GM10248 (cell line): ENCODE measurements at regions of chr5 and their contacts with region 1.

Region 1: GRCh38 chr5:160054831-160055230 is 45.9 kb downstream of the TTC1 start:
- DNase-seq: no peak
- CTCF ChIP-seq: no peak

Region 2: DNA sequence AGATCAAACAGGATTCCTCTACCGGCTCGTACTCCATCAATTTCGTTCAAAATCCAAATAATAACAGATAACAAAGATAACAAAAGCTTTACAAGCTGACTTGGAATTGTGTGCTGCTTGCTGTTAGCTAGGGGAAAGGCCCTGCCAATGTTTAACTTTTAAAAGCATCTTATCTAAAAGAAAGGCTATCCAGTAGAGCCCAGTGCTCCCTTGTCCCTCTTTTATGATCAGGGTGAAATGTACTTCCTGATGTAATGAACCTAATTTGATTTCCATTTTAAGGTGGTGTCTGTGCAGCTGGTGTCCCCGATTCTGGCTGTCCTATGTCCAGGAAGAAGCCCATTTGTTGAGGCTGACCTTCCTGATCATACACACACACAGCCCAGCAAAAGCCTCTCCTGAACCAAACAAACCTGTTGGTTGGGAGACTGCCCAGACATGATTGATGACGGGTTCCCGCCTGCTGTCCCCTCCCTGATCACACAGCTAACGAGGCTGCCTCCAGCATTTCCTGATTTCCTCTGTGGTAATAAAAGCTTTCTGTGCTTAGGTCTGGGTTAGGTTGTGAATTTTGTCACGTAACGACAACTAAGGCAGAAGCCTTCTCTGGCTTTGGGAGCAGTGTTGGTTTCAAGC is 10.3 kb after region 1 on chr5:
- CTCF ChIA-PET with region 1: interaction called, 25 read pairs
- POLR2A ChIA-PET with region 1: no interaction called
- DNase-seq: no peak
- CTCF ChIP-seq: no peak